ENCODE measurements at regions of chr3 and their contacts with region 1.

Region 1: GRCh38 chr3:128610451-128611158 is 40.0 kb downstream of the RPN1 start:
- DNase-seq: no peak
- H3K4me3 ChIP-seq: no peak overlapping the region
- H3K27ac ChIP-seq: no peak overlapping the region
- H3K4me1 ChIP-seq: peaks cover 14% of the 10 kb centered on the region
- H3K27me3 ChIP-seq: no peaks in the 10 kb centered on the region
- CTCF ChIP-seq: no peak
- POLR2A ChIP-seq: no peak

Region 2: GRCh38 chr3:128210711-128211110 is 399.9 kb before region 1 on chr3:
- intact Hi-C with region 1: no loop called
- DNase-seq: peak in 1 of 2 donors; percentile 32
- H3K4me3 ChIP-seq: no peak overlapping the region
- H3K27ac ChIP-seq: no peak overlapping the region
- H3K4me1 ChIP-seq: peaks cover 13% of the 10 kb centered on the region
- H3K27me3 ChIP-seq: no peaks in the 10 kb centered on the region
- CTCF ChIP-seq: no peak
- POLR2A ChIP-seq: no peak

Region 3: GRCh38 chr3:128426128-128426921 is 184.3 kb before region 1 on chr3:
- intact Hi-C with region 1: loop called (anchors 2 kb)
- DNase-seq: no peak
- H3K4me3 ChIP-seq: peak overlapping the region; percentile 20 to 37
- H3K27ac ChIP-seq: no peak overlapping the region
- H3K4me1 ChIP-seq: no peaks in the 10 kb centered on the region
- H3K27me3 ChIP-seq: no peaks in the 10 kb centered on the region
- CTCF ChIP-seq: peak; percentile 66 to 78 (median 78)
- POLR2A ChIP-seq: no peak